Activated CD4-positive, alpha-beta T cell treated with anti-CD3 and anti-CD28 coated beads for 36 hours (primary cell): ENCODE measurements at regions of chr5 and their contacts with region 1.

Region 1: GRCh38 chr5:141691867-141692532 is 10.0 kb upstream of the ARAP3 start:
- DNase-seq: peak; percentile 93
- ATAC-seq: peak; percentile 71
- H3K4me3 Mint-ChIP-seq: peak overlapping the region; percentile 64
- H3K27ac Mint-ChIP-seq: peak overlapping the region; percentile 55
- H3K4me1 Mint-ChIP-seq: peaks cover 25% of the 10 kb centered on the region
- H3K27me3 Mint-ChIP-seq: peaks cover 4% of the 10 kb centered on the region

Region 2: GRCh38 chr5:141681695-141682641 is 10.0 kb before region 1 on chr5 and contains the start of gene ARAP3:
- CTCF ChIA-PET with region 1: interaction called, 46 read pairs
- POLR2A ChIA-PET with region 1: no interaction called
- intact Hi-C with region 1: no loop called
- DNase-seq: peak; percentile 59
- ATAC-seq: peak; percentile 63
- H3K4me3 Mint-ChIP-seq: peak within 1 kb of the TSS; percentile 60
- H3K27ac Mint-ChIP-seq: peak within 1 kb of the TSS; percentile 62
- H3K4me1 Mint-ChIP-seq: peaks cover 19% of the 10 kb centered on the region
- H3K27me3 Mint-ChIP-seq: peaks cover 3% of the 10 kb centered on the region
- total RNA-seq, gene ARAP3: 3.2 TPM

Region 3: GRCh38 chr5:141825791-141826560 is 134.0 kb after region 1 on chr5:
- CTCF ChIA-PET with region 1: interaction called, 9 read pairs
- POLR2A ChIA-PET with region 1: no interaction called
- intact Hi-C with region 1: loop called (anchors 5 kb)
- DNase-seq: peak; percentile 24
- ATAC-seq: peak; percentile 55
- H3K4me3 Mint-ChIP-seq: no peak overlapping the region
- H3K27ac Mint-ChIP-seq: no peak overlapping the region
- H3K4me1 Mint-ChIP-seq: no peaks in the 10 kb centered on the region
- H3K27me3 Mint-ChIP-seq: peaks cover 4% of the 10 kb centered on the region

Region 4: DNA sequence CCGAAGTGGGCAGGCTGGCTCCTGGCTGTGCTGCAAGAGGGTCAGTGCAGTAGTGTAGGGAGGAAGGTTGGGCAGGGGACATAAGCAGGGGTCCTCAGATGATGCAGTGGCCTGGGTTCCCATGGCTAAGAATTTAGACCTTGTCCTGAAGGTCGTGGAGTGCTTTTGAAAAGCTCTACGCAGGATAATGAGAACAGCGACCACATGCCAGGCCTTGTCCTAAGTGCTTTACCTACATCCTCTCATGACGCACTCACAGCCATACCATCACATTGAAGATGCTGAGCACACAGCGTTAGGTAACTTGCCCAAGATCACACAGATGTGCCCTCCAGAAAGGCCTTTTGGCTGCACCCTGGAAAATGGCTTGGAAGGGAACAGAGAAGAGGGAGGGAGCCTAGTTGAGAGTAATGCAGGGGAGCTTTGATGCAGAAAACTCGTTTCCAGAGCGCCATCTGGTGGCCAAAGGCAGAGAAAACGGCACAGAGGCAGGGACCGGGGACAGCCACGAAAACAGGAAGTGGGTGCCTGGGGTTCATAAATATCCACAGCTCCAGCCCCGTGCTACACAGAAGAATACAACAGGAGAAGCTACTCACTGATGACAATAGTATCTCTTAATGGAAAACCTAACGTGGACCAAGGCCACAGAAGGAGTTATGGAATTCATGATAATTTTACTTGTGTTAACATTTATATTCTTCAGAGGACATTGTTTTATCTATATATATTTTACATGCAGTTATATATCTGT is 268.6 kb after region 1 on chr5:
- CTCF ChIA-PET with region 1: interaction called, 152 read pairs
- POLR2A ChIA-PET with region 1: interaction called, 12 read pairs
- intact Hi-C with region 1: loop called (anchors 1 kb)
- DNase-seq: peak; percentile 95
- ATAC-seq: peak; percentile 88
- H3K4me3 Mint-ChIP-seq: peak overlapping the region; percentile 10
- H3K27ac Mint-ChIP-seq: peak overlapping the region; percentile 82
- H3K4me1 Mint-ChIP-seq: peaks cover 38% of the 10 kb centered on the region
- H3K27me3 Mint-ChIP-seq: no peaks in the 10 kb centered on the region

Region 5: DNA sequence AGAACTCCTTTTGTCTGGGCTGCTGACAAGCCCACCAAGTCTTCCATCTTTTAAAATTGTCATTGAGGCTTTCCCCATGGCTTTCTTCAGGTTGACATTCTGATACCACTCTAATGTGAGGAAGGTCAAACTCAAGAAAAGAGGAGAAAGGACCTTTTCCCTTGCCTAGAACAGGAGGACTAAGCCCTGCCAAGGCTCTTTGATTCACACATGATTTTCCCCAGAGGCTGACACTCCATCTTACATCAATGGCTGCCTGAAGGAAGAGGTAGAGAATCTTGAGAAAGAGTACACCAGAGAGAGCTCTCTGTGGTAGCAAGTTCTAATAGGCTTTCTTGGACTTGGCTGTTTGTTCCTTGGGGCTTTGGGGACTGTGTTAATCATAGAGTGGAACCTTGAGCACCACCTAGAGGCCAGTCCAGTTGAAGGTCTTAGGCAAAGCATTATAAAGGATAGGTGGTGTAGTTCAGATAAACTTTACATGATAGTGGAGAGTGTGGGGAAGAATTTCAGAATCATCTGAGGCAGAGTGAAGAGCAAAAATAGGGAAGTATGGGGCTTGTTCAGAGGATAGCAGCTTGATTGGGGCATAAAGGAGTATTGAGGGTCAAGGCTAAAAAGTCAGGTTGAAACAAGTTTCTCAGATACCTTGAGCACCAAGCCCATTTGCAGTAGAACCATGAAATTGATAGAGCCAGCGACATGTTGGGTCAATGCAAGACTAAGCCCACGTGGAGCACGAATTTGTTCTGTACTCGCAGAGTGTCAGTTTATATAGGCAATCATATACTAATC is 453.3 kb after region 1 on chr5:
- CTCF ChIA-PET with region 1: interaction called, 3 read pairs
- POLR2A ChIA-PET with region 1: no interaction called
- intact Hi-C with region 1: loop called (anchors 2 to 5 kb)
- DNase-seq: peak; percentile 78
- ATAC-seq: peak; percentile 93
- H3K4me3 Mint-ChIP-seq: no peak overlapping the region
- H3K27ac Mint-ChIP-seq: no peak overlapping the region
- H3K4me1 Mint-ChIP-seq: peaks cover 7% of the 10 kb centered on the region
- H3K27me3 Mint-ChIP-seq: no peaks in the 10 kb centered on the region

Region 6: GRCh38 chr5:142201471-142201887 is 509.5 kb after region 1 on chr5:
- CTCF ChIA-PET with region 1: no interaction called
- POLR2A ChIA-PET with region 1: no interaction called
- intact Hi-C with region 1: no loop called
- DNase-seq: no peak
- ATAC-seq: no peak
- H3K4me3 Mint-ChIP-seq: no peak overlapping the region
- H3K27ac Mint-ChIP-seq: no peak overlapping the region
- H3K4me1 Mint-ChIP-seq: no peaks in the 10 kb centered on the region
- H3K27me3 Mint-ChIP-seq: peaks cover 3% of the 10 kb centered on the region